ENCODE measurements at regions of chr4 and their contacts with region 1.

Region 1: DNA sequence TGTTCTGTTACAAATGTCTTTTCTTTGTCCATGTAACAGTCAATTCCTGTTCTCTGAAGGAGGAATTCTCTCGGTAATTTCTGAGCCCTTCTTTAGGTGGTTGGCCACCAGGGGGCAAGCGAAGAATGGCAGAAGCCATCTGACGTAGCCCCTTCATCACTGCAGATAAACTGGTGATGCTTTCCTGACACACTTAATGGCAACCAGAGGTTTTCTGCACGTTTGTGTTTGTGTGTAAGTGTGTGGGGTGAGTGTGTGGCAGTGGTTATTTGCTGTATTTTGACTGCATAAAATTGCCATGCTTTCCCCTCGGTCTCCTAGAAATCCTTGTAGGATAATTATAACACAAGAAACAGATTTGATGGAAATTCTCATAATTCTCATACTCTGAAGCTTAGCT is 64.8 kb upstream of the STOX2 start:
- DNase-seq: peak; percentile 46 to 66
- H3K4me3 ChIP-seq: no peak overlapping the region
- H3K27ac ChIP-seq: no peak overlapping the region
- H3K4me1 ChIP-seq: no peaks in the 10 kb centered on the region
- H3K27me3 ChIP-seq: no peaks in the 10 kb centered on the region
- CTCF ChIP-seq: peak; percentile 83

Region 2: DNA sequence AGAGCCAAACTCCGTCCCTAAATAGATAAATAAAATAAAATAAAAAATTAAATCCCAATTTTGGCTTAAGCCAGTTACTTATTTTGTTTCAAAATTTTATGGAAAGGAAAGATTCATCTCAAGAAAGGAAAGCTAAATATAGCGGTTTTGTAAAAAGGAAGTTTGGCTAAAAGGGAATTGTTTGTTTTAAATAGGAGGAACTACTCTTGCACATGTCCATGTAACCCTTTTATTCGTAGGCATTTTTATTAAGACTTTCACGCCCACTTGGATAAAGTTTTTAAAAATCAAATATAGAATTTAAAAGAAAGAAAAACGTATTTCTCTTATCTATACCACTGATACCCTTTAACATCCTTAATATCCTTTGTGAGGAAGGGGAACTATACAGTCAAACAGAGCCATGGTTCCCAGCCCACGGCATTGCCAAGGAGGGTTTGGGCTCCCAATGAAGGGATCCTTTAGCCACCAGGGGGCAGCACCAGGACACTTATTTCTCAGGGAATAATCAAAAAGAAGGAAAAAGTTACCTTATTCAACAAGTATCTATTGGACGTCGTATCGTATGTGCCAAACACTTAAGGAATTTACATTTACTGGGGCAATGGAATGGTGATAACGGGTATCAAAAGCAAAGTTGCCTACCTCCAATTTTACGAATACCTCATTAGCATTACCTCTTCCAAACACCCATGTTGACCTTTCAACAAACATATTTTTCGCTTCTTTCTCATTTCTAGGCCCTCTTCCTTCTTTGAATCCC is 368.2 kb before region 1 on chr4:
- CTCF ChIA-PET with region 1: no interaction called
- POLR2A ChIA-PET with region 1: no interaction called
- intact Hi-C with region 1: loop called (anchors 2 kb)
- DNase-seq: peak; percentile 46 to 72
- H3K4me3 ChIP-seq: no peak overlapping the region
- H3K27ac ChIP-seq: no peak overlapping the region
- H3K4me1 ChIP-seq: peaks cover 10% of the 10 kb centered on the region; the same call in 1 of the 2 replicates
- H3K27me3 ChIP-seq: no peaks in the 10 kb centered on the region
- CTCF ChIP-seq: peak; percentile 82

Region 3: GRCh38 chr4:183765251-183765911 is 74.9 kb before region 1 on chr4:
- CTCF ChIA-PET with region 1: no interaction called
- POLR2A ChIA-PET with region 1: interaction called, 16 read pairs
- intact Hi-C with region 1: no loop called
- DNase-seq: no peak
- H3K4me3 ChIP-seq: no peak overlapping the region
- H3K27ac ChIP-seq: no peak overlapping the region
- H3K4me1 ChIP-seq: peaks cover 6% of the 10 kb centered on the region
- H3K27me3 ChIP-seq: no peaks in the 10 kb centered on the region
- CTCF ChIP-seq: no peak

Region 4: DNA sequence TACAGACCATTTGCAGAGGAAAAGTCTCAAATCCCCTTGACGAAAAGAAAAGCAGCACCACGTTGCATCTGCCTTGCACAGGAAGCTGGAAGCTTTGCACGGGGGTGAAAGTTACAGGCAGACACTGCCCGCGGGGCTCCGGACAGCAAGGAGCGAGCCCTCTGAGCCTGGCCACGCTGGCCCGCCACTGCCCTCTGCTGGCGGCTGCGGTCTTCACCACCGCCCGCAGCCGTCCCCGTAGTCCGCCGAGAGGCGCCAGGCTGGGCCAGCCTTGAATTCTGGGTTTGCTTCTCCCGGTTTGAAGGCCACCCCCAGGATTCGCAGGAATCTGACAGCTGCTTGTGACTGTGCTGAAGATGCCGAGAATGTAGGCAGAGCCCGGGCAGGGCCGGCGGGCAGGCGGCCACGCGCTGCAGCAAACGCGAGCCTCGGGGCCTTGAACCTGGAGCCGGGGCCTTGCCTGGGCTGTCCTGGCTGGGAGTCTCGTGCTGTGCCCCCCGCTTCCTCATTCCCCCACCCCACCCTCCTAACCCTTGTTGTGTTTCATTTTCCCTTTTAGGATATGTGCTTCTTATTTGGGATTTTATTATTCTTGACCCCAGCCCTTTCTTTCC is 328.2 kb after region 1 on chr4:
- CTCF ChIA-PET with region 1: no interaction called
- POLR2A ChIA-PET with region 1: no interaction called
- intact Hi-C with region 1: loop called (anchors 1 kb)
- DNase-seq: peak in 1 of 2 experiments; percentile 65
- H3K4me3 ChIP-seq: no peak overlapping the region
- H3K27ac ChIP-seq: no peak overlapping the region
- H3K4me1 ChIP-seq: no peaks in the 10 kb centered on the region
- H3K27me3 ChIP-seq: no peaks in the 10 kb centered on the region
- CTCF ChIP-seq: peak; percentile 84

Region 5: GRCh38 chr4:184538023-184538599 is 697.8 kb after region 1 on chr4:
- CTCF ChIA-PET with region 1: no interaction called
- POLR2A ChIA-PET with region 1: no interaction called
- intact Hi-C with region 1: loop called (anchors 2 kb)
- DNase-seq: peak; percentile 65 to 71
- H3K4me3 ChIP-seq: peak overlapping the region; percentile 67
- H3K27ac ChIP-seq: peak overlapping the region; percentile 66
- H3K4me1 ChIP-seq: no peaks in the 10 kb centered on the region; the same call in 1 of the 2 replicates
- H3K27me3 ChIP-seq: no peaks in the 10 kb centered on the region
- CTCF ChIP-seq: peak; percentile 67

Measured in PC-9 (cell line).